Mammary epithelial cell (primary cell): ENCODE measurements at regions of chr19 and their contacts with region 1.

Region 1: DNA sequence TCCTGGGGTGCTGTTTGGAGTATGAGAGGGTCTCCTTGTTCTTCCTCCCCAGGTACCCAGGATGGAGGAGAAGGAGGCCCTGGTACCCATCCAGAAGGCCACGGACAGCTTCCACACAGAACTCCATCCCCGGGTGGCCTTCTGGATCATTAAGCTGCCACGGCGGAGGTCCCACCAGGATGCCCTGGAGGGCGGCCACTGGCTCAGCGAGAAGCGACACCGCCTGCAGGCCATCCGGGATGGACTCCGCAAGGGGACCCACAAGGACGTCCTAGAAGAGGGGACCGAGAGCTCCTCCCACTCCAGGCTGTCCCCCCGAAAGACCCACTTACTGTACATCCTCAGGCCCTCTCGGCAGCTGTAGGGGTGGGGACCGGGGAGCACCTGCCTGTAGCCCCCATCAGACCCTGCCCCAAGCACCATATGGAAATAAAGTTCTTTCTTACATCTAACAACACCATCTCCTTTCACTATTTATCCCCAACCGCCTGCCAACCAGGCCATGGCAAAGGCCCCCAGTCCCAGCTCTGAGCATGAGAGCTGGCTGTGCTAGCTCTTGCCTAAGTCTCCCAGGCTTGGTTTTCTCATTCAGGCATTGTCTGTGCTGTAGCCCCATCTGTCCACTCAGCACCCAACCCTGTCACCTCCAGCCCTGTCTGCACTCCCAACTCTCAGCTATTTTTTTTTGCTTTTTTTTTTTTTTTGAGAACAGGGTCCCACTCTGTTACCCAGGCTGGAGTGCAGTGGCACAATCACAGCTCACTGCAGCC is 11.2 kb downstream of the DKKL1 start:
- DNase-seq: no peak
- H3K4me3 ChIP-seq: no peak overlapping the region
- H3K27ac ChIP-seq: no peak overlapping the region
- H3K4me1 ChIP-seq: no peaks in the 10 kb centered on the region
- H3K27me3 ChIP-seq: no peaks in the 10 kb centered on the region
- CTCF ChIP-seq: no peak

Region 2: GRCh38 chr19:49301165-49301865 is 73.5 kb before region 1 on chr19:
- CTCF ChIA-PET with region 1: no interaction called
- dilution Hi-C with region 1: loop called (anchors 5 kb)
- in situ Hi-C with region 1: no loop called
- intact Hi-C with region 1: no loop called
- DNase-seq: peak; percentile 57
- H3K4me3 ChIP-seq: peak overlapping the region in 1 of 3 experiments; percentile 31
- H3K27ac ChIP-seq: no peak overlapping the region
- H3K4me1 ChIP-seq: no peaks in the 10 kb centered on the region
- H3K27me3 ChIP-seq: peaks cover 2% of the 10 kb centered on the region
- CTCF ChIP-seq: peak; percentile 95 to 97

Region 3: DNA sequence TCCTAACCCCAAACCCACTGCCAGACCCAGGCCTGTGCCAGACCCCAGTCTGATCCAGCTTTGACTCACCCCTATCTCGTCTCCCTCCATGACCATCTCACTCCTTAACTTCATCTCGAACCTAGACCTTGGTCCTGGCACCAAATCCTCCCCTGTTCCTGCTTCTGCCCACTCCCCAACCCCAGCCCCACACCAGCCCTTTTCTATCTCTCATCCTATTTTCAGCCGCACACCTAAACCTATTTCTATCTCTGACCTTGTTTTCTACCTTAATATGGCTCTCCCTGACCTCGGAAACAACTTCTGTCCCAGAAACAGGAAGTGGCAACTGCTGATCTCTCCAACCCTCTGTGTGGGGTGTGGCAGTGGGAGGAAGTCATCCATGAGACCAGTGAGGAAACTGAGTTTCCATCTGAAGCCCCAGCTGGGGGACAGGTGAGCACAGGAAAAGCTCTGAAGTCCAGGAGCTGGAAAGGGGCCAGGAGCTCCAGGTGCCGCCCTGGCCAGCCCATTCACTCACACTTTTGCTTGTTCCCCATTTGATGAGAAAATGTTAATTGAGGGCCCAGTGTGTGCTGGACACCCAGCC is 34.7 kb after region 1 on chr19:
- CTCF ChIA-PET with region 1: no interaction called
- dilution Hi-C with region 1: loop called (anchors 5 kb)
- in situ Hi-C with region 1: no loop called
- intact Hi-C with region 1: no loop called
- DNase-seq: no peak
- H3K4me3 ChIP-seq: no peak overlapping the region
- H3K27ac ChIP-seq: no peak overlapping the region
- H3K4me1 ChIP-seq: no peaks in the 10 kb centered on the region
- H3K27me3 ChIP-seq: no peaks in the 10 kb centered on the region
- CTCF ChIP-seq: no peak

Region 4: GRCh38 chr19:49451430-49452181 is 76.8 kb after region 1 on chr19 and contains the start of gene PIH1D1:
- CTCF ChIA-PET with region 1: no interaction called
- dilution Hi-C with region 1: loop called (anchors 5 kb)
- in situ Hi-C with region 1: no loop called
- intact Hi-C with region 1: no loop called
- DNase-seq: peak; percentile 99
- H3K4me3 ChIP-seq: peak within 1 kb of the TSS; percentile 71 to 92 (median 77)
- H3K27ac ChIP-seq: peak within 1 kb of the TSS; percentile 92
- H3K4me1 ChIP-seq: peaks cover 13% of the 10 kb centered on the region
- H3K27me3 ChIP-seq: no peaks in the 10 kb centered on the region
- CTCF ChIP-seq: no peak
- total RNA-seq, gene PIH1D1: 61.2 to 62.4 TPM